Activated T-helper 2 cell treated with anti-CD3 and anti-CD28 coated beads, Interferon-gamma antibody, Interleukin-2, Interleukin-4, amounts not matched to agents 10 μg/mL and 5 μg/mL and 100 μg/mL, durations not matched to agents 14 hours and 24 hours and 36 hours (primary cell): ENCODE measurements at regions of chr2 and their contacts with region 1.

Region 1: GRCh38 chr2:207769597-207770486 is at the start of gene FZD5:
- DNase-seq: peak; percentile 76
- H3K4me3 Mint-ChIP-seq: peak within 1 kb of the TSS; percentile 83
- H3K27ac Mint-ChIP-seq: peak within 1 kb of the TSS; percentile 46
- H3K4me1 Mint-ChIP-seq: peaks cover 23% of the 10 kb centered on the region
- H3K27me3 Mint-ChIP-seq: peaks cover 58% of the 10 kb centered on the region
- total RNA-seq, gene FZD5: 1.7 TPM in 2 replicates

Region 2: GRCh38 chr2:207710814-207711740 is 58.8 kb before region 1 on chr2 and contains the start of gene CCNYL1:
- intact Hi-C with region 1: loop called (anchors 1 kb)
- DNase-seq: peak; percentile 99
- H3K4me3 Mint-ChIP-seq: peak within 1 kb of the TSS; percentile 96
- H3K27ac Mint-ChIP-seq: peak within 1 kb of the TSS; percentile 87
- H3K4me1 Mint-ChIP-seq: peaks cover 21% of the 10 kb centered on the region
- H3K27me3 Mint-ChIP-seq: no peaks in the 10 kb centered on the region
- total RNA-seq, gene CCNYL1: 6.7 and 8.2 TPM in 2 replicates

Region 3: GRCh38 chr2:207833251-207833751 is 63.5 kb after region 1 on chr2:
- intact Hi-C with region 1: loop called (anchors 1 kb)
- DNase-seq: no peak
- H3K4me3 Mint-ChIP-seq: no peak overlapping the region
- H3K27ac Mint-ChIP-seq: peak overlapping the region; percentile 69
- H3K4me1 Mint-ChIP-seq: peaks cover 31% of the 10 kb centered on the region
- H3K27me3 Mint-ChIP-seq: no peaks in the 10 kb centered on the region

Region 4: GRCh38 chr2:208040199-208041171 is 270.6 kb after region 1 on chr2:
- intact Hi-C with region 1: loop called (anchors 2 kb)
- DNase-seq: peak; percentile 51
- H3K4me3 Mint-ChIP-seq: no peak overlapping the region
- H3K27ac Mint-ChIP-seq: no peak overlapping the region
- H3K4me1 Mint-ChIP-seq: peaks cover 3% of the 10 kb centered on the region
- H3K27me3 Mint-ChIP-seq: peaks cover 21% of the 10 kb centered on the region